Gastrocnemius medialis (tissue), 4 donors: ENCODE measurements at regions of chr11 and their contacts with region 1.

Region 1: GRCh38 chr11:126211235-126212088 is at the starts of genes FAM118B and RPUSD4:
- DNase-seq: peak; percentile 98 to 99
- ATAC-seq: peak; percentile 79 to 89
- H3K4me3 ChIP-seq: peak within 1 kb of the TSS; percentile 88 to 93 (median 91)
- H3K27ac ChIP-seq: peak within 1 kb of the TSS; percentile 91 to 95 (median 92)
- H3K4me1 ChIP-seq: peaks cover 52 to 55% of the 10 kb centered on the region in 2 donors
- H3K27me3 ChIP-seq: no peaks in the 10 kb centered on the region
- CTCF ChIP-seq: no peak
- POLR2A ChIP-seq: peak; percentile 93 to 95
- total RNA-seq, gene FAM118B: 13.6 to 32.2 (median 23.2) TPM
- total RNA-seq, gene RPUSD4: 53.3 to 93.8 (median 69.2) TPM

Region 2: GRCh38 chr11:125592305-125593112 is 619.0 kb before region 1 on chr11 and contains the start of gene STT3A:
- in situ Hi-C with region 1: loop called in 1 of 4 experiments (anchors 25 kb)
- intact Hi-C with region 1: loop called (anchors 5 kb)
- DNase-seq: peak; percentile 99 to 100
- ATAC-seq: peak; percentile 95 to 97
- H3K4me3 ChIP-seq: peak within 1 kb of the TSS; percentile 86 to 95 (median 90)
- H3K27ac ChIP-seq: peak within 1 kb of the TSS; percentile 89 to 99 (median 94)
- H3K4me1 ChIP-seq: peaks cover 17 to 24% of the 10 kb centered on the region in 2 donors
- H3K27me3 ChIP-seq: no peaks in the 10 kb centered on the region
- CTCF ChIP-seq: no peak
- POLR2A ChIP-seq: peak; percentile 86 to 90
- total RNA-seq, gene STT3A: 31.5 to 34.6 (median 32.9) TPM

Region 3: GRCh38 chr11:126062679-126063506 is 148.6 kb before region 1 on chr11 and contains the start of gene CDON:
- in situ Hi-C with region 1: no loop called
- intact Hi-C with region 1: loop called (anchors 5 kb)
- DNase-seq: peak; percentile 84 to 87
- ATAC-seq: peak; percentile 95 to 96
- H3K4me3 ChIP-seq: peak within 1 kb of the TSS; percentile 65 to 84 (median 74)
- H3K27ac ChIP-seq: peak within 1 kb of the TSS; percentile 64 to 83 (median 68)
- H3K4me1 ChIP-seq: peaks cover 9 to 11% of the 10 kb centered on the region in 2 donors
- H3K27me3 ChIP-seq: peaks cover 0 to 7% (median under 1%) of the 10 kb centered on the region in 3 donors
- CTCF ChIP-seq: peak in 1 of 5 experiments; percentile 25
- POLR2A ChIP-seq: peak in 1 of 2 donors; percentile 27
- total RNA-seq, gene CDON: 1.0 to 2.0 (median 1.8) TPM

Region 4: DNA sequence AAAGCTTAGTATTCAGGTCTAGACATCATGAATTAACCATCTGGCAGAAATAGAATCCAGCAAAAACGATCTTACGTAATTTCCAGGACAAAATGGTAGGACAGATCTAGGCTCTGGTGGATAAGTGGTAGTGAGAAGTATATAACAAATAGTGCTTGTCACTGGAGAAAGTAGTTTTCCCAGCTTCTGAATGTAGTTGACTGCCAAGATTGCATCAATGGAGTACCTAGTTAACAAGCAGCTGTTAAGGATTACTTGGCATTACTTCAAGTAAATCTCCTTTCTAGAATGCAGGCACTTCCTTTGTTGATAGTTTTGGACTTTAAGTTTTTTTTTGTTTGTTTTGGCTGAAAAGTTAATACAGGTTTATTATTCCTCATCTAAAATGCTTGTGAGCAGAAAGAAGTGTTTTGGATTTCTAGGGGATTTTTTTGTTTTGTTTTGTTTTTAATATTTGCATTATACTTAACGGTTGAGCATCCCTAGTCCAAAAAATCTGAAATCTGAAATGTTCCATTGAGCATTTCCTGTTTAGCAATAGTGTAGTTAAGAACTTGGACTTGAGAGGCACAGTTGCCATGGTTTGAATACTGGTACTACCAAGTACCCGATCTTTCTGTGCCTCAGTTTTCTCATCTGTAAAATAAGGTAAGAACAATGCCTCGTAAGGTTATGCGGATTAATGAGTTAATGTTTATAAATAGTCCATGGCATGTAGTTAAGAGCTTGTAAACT is 20.4 kb after region 1 on chr11:
- in situ Hi-C with region 1: no loop called
- intact Hi-C with region 1: loop called (anchors 2 kb)
- DNase-seq: no peak
- ATAC-seq: peak; percentile 51 to 66
- H3K4me3 ChIP-seq: no peak overlapping the region
- H3K27ac ChIP-seq: peak overlapping the region in 2 of 4 donors; percentile 11 to 28
- H3K4me1 ChIP-seq: peaks cover 12 to 20% of the 10 kb centered on the region in 2 donors
- H3K27me3 ChIP-seq: no peaks in the 10 kb centered on the region
- CTCF ChIP-seq: no peak
- POLR2A ChIP-seq: no peak

Region 5: DNA sequence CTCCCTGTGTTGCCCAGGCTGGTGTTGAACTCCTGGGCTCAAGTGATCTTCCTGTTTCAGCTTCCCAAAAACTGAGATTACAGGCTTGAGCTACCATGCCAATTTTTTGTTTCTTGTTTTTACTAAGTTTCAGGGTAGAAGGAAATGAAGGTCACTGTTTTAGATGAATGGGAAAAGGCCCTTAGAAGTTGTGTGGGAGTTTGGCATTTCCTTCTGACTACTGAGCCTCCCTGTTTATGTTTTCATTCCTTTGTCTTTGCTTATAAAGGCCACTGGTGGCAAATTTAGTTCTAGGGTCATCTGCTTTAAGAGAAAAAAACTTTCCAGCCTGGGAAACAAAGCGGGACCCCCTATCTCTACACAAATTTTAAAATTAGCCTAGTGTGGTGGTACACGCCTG is 35.2 kb after region 1 on chr11:
- in situ Hi-C with region 1: no loop called
- intact Hi-C with region 1: no loop called
- DNase-seq: no peak
- ATAC-seq: no peak
- H3K4me3 ChIP-seq: no peak overlapping the region
- H3K27ac ChIP-seq: no peak overlapping the region
- H3K4me1 ChIP-seq: no peaks in the 10 kb centered on the region
- H3K27me3 ChIP-seq: no peaks in the 10 kb centered on the region
- CTCF ChIP-seq: no peak
- POLR2A ChIP-seq: no peak

Region 6: DNA sequence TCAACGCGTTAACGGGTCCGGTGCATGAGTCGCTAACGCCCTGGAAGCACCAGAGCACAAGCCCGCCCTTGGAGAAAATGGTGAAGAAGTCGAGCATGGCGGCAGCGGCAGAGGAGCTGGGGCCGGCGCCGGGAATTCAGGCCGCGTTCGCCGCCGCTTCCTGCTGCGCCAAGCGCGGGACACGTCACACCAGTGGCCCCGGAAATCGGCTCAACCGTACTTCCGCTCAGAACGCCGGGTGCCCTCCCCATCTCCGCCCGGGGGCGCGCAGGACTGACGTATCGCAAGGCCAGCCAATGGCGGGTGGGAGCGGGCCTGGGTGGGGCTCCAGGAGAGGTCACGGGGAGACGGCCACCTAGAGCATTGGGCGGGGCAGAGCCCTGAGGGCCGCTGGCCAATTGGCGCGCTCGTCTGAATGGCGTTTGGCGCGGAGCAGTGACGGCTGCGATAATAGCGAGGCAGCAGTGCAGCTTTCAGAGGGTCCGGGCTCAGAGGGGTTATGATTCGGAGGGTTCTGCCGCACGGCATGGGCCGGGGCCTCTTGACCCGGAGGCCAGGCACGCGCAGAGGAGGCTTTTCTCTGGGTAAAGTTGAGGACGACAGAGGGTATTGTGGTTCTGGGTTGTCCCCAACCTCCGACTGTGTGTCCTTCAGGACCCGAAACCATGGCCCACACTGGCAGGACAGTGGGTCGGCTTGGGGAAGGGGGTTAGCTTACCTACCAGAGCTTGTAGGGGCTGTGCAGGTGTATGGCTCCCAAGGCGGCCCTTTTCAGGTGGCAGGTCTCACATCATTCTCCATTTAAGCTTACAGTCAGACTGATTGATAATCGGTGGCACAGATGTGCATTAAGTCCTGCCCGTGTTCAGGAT is 57.5 kb after region 1 on chr11 and contains the starts of genes FOXRED1 and SRPRA:
- in situ Hi-C with region 1: loop called in 2 of 4 experiments (anchors 5 to 10 kb)
- intact Hi-C with region 1: loop called (anchors 1 kb)
- DNase-seq: peak; percentile 99 to 100
- ATAC-seq: peak; percentile 91 to 94
- H3K4me3 ChIP-seq: peak within 1 kb of the TSS; percentile 82 to 99 (median 88)
- H3K27ac ChIP-seq: peak within 1 kb of the TSS; percentile 87 to 96 (median 91)
- H3K4me1 ChIP-seq: peaks cover 22% of the 10 kb centered on the region in 2 donors
- H3K27me3 ChIP-seq: no peaks in the 10 kb centered on the region
- CTCF ChIP-seq: peak in 1 of 5 experiments; percentile 8
- POLR2A ChIP-seq: peak; percentile 76 to 86
- total RNA-seq, gene FOXRED1: 12.5 to 20.8 (median 16.2) TPM
- total RNA-seq, gene SRPRA: 72.3 to 101 (median 79.4) TPM

Region 7: GRCh38 chr11:126277780-126278179 is 66.3 kb after region 1 on chr11:
- in situ Hi-C with region 1: loop called in 1 of 4 experiments (anchors 10 kb)
- intact Hi-C with region 1: no loop called
- DNase-seq: no peak
- ATAC-seq: no peak
- H3K4me3 ChIP-seq: no peak overlapping the region
- H3K27ac ChIP-seq: no peak overlapping the region
- H3K4me1 ChIP-seq: peaks cover 7 to 8% of the 10 kb centered on the region in 2 donors
- H3K27me3 ChIP-seq: no peaks in the 10 kb centered on the region
- CTCF ChIP-seq: no peak
- POLR2A ChIP-seq: no peak

Region 8: DNA sequence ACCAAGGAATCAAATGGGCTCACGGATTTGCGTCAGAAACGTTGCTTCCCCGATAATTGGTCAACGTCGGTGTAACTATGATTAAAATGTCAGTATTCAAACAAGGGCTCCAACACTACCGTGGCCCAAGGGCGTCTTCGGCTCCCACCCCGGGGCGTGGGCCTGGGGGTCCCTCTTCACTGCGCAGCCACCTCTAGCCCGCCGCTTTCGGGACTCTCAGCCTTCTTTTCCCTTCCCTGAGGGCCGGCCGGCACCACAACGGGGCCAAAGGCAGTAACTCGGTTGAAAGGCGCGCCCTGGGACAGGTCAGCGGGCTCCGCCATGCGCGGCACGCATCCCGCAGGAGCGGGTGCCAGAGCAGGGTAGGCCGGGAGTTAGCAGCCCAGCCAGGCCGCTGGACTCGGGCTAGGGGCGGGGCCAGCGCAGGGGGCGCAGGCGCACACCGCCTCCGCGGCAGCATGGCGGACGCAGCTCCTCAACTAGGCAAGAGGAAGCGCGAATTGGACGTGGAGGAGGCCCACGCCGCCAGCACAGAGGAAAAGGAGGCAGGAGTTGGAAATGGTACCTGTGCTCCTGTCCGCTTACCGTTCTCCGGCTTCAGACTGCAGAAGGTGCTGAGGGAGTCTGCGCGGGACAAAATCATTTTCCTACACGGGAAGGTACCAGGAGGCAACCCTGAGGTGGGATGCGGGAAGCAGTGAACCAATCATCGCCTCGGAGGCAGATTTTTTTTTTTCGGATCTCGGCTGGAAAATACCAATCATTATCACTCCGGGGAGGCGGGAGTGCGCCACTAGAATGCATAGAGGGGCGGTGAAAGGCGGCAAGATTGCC is 92.4 kb after region 1 on chr11 and contains the start of gene DCPS:
- in situ Hi-C with region 1: no loop called
- intact Hi-C with region 1: loop called (anchors 5 kb)
- DNase-seq: peak; percentile 77 to 89
- ATAC-seq: peak; percentile 88 to 95
- H3K4me3 ChIP-seq: peak within 1 kb of the TSS; percentile 61 to 89 (median 76)
- H3K27ac ChIP-seq: peak within 1 kb of the TSS; percentile 85 to 96 (median 90)
- H3K4me1 ChIP-seq: peaks cover 14 to 34% of the 10 kb centered on the region in 2 donors
- H3K27me3 ChIP-seq: no peaks in the 10 kb centered on the region
- CTCF ChIP-seq: no peak
- POLR2A ChIP-seq: peak; percentile 23 to 31
- total RNA-seq, gene DCPS: 9.8 to 23.1 (median 11.5) TPM